GM10248 (cell line): ENCODE measurements at regions of chr13 and their contacts with region 1.

Region 1: DNA sequence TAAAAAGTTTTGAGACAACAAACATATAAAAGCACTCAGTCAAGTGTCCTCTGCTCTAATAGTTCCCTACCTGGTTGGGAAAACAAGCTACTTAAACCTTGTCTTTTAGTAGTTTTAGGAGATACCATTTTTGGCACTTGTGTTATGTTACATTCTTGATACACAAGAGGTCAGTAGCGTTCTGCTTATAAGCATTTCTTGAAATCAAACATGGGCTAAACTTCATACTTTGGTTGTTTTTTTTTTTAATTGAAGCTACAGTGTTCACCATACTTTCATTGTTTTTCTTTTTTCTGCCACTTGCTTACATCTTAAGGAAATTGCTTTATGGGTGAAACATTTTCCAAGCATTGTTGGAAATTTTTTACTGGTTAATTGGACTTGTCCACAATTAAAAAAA is 12.9 kb downstream of the NHLRC3 start:
- DNase-seq: peak; percentile 23
- CTCF ChIP-seq: peak; percentile 46

Region 2: DNA sequence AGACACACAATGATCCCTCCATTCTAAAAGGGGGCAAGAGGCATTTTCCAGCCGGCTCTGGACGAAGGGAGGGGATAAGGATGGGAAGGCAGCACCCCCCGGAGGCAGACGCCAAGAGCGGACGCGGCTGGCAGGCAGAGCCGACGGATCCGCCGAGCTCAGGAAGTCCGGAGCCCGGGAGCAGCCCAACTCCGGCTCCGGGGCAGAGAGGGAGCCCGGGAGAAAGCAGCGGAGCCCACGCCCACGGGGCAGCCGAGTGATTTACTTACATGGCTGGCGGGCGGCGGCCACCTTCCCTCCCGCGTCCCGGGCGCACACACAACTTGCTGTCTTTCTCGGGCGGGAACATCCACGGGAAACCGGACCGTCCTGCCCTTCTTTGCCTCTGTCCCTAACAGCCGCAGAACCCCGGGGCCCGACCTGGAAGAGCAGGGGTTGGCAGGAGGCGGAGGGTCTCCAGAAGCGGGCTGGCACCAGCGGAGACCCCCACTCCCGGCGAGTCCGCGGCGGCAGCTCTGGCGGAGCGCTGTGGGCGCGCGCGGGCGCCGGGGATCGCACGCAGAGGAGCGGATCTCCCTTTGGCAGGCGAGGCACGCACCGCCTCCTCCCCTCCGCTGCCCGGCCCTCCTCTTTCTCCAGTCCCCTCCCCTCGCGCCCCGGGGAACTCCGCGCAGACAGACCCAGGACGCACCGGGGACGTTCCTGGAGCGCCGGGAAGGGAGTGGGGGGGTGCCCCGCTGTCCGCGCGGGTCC is 551.6 kb after region 1 on chr13 and contains the start of gene LHFPL6:
- CTCF ChIA-PET with region 1: interaction called, 11 read pairs
- POLR2A ChIA-PET with region 1: no interaction called
- DNase-seq: peak; percentile 87
- CTCF ChIP-seq: peak; percentile 25